Activated CD4-positive, alpha-beta T cell treated with anti-CD3 and anti-CD28 coated beads, Interleukin-2, amount 10 ng/mL, durations not matched to agents 24 days and 14 days (primary cell): ENCODE measurements at regions of chr1 and their contacts with region 1.

Region 1: DNA sequence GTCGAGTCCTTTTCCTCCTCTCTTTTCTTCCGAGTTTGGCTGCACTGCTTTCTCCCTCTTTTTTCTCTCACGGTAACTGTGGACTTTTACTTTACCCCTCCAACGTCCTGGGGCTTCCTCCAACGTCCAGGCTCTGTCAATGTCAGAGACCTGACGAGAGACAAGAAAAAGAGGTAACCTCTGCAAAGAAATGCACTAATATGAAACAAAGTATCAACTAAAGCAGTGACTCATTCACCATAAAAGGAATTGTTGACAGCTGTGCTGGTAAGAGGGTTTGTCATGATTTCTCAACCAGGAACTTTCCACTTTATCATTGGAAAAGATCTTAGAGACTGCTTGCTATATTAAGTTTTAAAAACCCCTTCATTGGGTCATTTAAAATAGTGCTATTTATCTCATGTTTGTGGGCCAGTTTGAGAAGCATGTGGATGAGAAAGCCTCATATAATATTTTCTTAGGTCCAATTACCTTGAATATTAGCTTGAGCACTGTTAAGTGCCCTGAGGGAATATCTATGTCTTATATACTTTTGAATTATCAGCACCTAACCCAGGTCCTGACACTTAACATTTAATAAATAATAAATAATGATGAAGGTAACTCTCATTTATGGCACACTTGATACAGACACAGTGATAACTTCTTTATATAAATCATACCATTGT is at the start of gene GBP2:
- DNase-seq: peak; percentile 81
- H3K4me3 Mint-ChIP-seq: peak within 1 kb of the TSS; percentile 93
- H3K27ac Mint-ChIP-seq: peak within 1 kb of the TSS; percentile 98
- H3K4me1 Mint-ChIP-seq: peaks cover 61% of the 10 kb centered on the region
- H3K27me3 Mint-ChIP-seq: no peaks in the 10 kb centered on the region
- total RNA-seq, gene GBP2: 168 and 169 TPM in 2 replicates

Region 2: GRCh38 chr1:88618331-88618730 is 507.7 kb before region 1 on chr1:
- intact Hi-C with region 1: no loop called
- DNase-seq: no peak
- H3K4me3 Mint-ChIP-seq: no peak overlapping the region
- H3K27ac Mint-ChIP-seq: no peak overlapping the region
- H3K4me1 Mint-ChIP-seq: no peaks in the 10 kb centered on the region
- H3K27me3 Mint-ChIP-seq: no peaks in the 10 kb centered on the region

Region 3: DNA sequence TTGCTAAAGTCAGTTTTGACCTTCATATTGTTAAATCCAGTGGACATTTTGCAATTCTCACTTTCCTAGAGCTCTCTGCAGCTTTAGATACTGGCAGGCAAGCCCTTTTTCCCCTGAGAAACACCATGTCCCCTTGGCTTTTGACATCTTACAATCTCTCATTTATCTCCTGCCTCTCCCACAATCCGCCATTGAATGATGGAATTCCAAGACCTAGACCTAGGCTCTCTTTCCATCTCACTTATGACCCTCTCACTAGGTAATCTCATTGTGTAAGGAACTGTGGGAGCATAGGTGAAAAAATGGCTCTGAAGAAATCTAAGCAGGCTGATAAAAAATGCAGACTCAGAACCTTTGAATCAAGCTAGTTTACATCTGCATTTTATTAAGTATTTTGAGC is 135.6 kb before region 1 on chr1:
- intact Hi-C with region 1: loop called (anchors 1 kb)
- DNase-seq: no peak
- H3K4me3 Mint-ChIP-seq: peak overlapping the region; percentile 20
- H3K27ac Mint-ChIP-seq: no peak overlapping the region
- H3K4me1 Mint-ChIP-seq: peaks cover 43% of the 10 kb centered on the region
- H3K27me3 Mint-ChIP-seq: no peaks in the 10 kb centered on the region

Region 4: GRCh38 chr1:89065079-89065868 is 60.8 kb before region 1 on chr1 and contains the start of gene GBP1:
- intact Hi-C with region 1: loop called (anchors 2 kb)
- DNase-seq: peak; percentile 79
- H3K4me3 Mint-ChIP-seq: peak within 1 kb of the TSS; percentile 96
- H3K27ac Mint-ChIP-seq: peak within 1 kb of the TSS; percentile 96
- H3K4me1 Mint-ChIP-seq: peaks cover 59% of the 10 kb centered on the region
- H3K27me3 Mint-ChIP-seq: no peaks in the 10 kb centered on the region
- total RNA-seq, gene GBP1: 36.9 and 38.3 TPM in 2 replicates

Region 5: GRCh38 chr1:89149229-89149628 is 23.2 kb after region 1 on chr1:
- intact Hi-C with region 1: no loop called
- DNase-seq: no peak
- H3K4me3 Mint-ChIP-seq: no peak overlapping the region
- H3K27ac Mint-ChIP-seq: no peak overlapping the region
- H3K4me1 Mint-ChIP-seq: peaks cover 6% of the 10 kb centered on the region
- H3K27me3 Mint-ChIP-seq: peaks cover 4% of the 10 kb centered on the region

Region 6: DNA sequence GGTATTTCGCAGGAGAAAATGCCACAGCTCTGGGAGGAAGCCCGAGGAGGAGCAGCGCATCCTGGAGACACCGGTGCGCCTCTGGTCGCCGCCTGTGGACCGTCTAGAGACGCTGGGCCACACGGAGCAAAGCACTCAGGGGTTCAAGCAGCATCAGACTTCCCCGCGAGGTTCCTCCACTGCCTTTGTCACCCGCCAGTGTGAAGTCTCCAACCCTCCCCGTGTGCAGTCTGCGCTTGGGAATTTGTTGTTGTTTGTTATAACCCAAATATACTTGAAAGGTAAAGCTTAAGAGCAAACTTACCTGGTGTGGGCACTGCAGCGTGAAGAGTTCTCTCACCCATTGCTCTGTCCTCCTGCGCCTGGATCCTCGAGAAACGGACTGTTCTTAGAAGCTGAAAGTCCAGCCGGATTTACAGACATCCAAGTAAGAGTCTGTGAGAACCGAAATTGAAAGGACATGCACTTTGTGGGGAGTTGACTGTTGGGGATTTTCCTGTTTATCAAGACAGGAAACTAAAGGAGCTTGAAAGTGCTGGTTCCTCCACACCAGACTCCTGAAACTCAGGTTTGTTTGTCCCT is 72.5 kb after region 1 on chr1 and contains the start of gene GBP4:
- intact Hi-C with region 1: loop called (anchors 1 kb)
- DNase-seq: peak; percentile 87
- H3K4me3 Mint-ChIP-seq: peak within 1 kb of the TSS; percentile 91
- H3K27ac Mint-ChIP-seq: peak within 1 kb of the TSS; percentile 96
- H3K4me1 Mint-ChIP-seq: peaks cover 67% of the 10 kb centered on the region
- H3K27me3 Mint-ChIP-seq: no peaks in the 10 kb centered on the region
- total RNA-seq, gene GBP4: 29.5 and 33.5 TPM in 2 replicates

Region 7: DNA sequence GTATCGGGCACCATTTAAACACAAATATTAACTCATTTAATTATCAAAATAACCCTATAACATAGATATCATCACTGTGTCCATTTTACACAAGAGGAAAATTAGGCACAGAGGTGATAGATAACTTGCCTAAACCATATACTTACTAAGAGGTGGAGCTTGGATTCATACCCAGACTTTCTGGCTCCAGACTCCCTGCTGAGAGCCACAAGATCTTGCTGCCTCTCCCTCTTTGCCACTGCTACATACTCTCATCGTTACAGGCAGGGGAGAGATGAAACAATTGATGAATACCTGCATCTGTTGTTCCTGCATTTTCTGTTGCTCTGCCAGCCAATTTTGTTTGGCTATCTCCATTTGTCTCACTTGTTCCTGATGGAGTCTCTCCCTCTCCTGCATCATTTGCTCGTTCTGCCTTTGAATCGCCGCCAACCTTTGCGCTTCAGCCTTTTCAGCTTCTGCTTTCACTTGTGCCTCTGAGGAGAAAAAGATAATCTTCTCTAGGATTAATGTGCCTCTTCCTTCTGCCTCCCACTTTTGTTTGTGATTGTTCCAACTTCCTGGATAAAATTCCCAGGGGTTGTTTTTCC is 136.0 kb after region 1 on chr1:
- intact Hi-C with region 1: loop called (anchors 2 kb)
- DNase-seq: no peak
- H3K4me3 Mint-ChIP-seq: peak overlapping the region; percentile 67
- H3K27ac Mint-ChIP-seq: peak overlapping the region; percentile 79
- H3K4me1 Mint-ChIP-seq: peaks cover 74% of the 10 kb centered on the region
- H3K27me3 Mint-ChIP-seq: no peaks in the 10 kb centered on the region

Region 8: GRCh38 chr1:89611721-89612120 is 485.7 kb after region 1 on chr1:
- intact Hi-C with region 1: loop called (anchors 2 kb)
- DNase-seq: peak; percentile 82
- H3K4me3 Mint-ChIP-seq: peak overlapping the region; percentile 88
- H3K27ac Mint-ChIP-seq: peak overlapping the region; percentile 99
- H3K4me1 Mint-ChIP-seq: peaks cover 68% of the 10 kb centered on the region
- H3K27me3 Mint-ChIP-seq: no peaks in the 10 kb centered on the region